CD8-positive, alpha-beta T cell (primary cell): ENCODE measurements at regions of chr21 and their contacts with region 1.

Region 1: GRCh38 chr21:32569261-32570230 is 15.8 kb downstream of the TCP10L start:
- DNase-seq: peak; percentile 67 to 93 (median 84)
- ATAC-seq: peak; percentile 88
- H3K4me3 ChIP-seq: peak overlapping the region; percentile 64 to 78
- H3K4me3 Mint-ChIP-seq: peak overlapping the region; percentile 90
- H3K27ac ChIP-seq: peak overlapping the region; percentile 46 to 63
- H3K27ac Mint-ChIP-seq: peak overlapping the region; percentile 91
- H3K4me1 ChIP-seq: peaks cover 18% of the 10 kb centered on the region
- H3K4me1 Mint-ChIP-seq: peaks cover 25% of the 10 kb centered on the region
- H3K27me3 ChIP-seq: no peaks in the 10 kb centered on the region
- H3K27me3 Mint-ChIP-seq: no peaks in the 10 kb centered on the region
- CTCF ChIP-seq: peak; percentile 97

Region 2: GRCh38 chr21:32278518-32279376 is 290.8 kb before region 1 on chr21 and contains the start of gene MIS18A:
- CTCF ChIA-PET with region 1: no interaction called
- POLR2A ChIA-PET with region 1: interaction called, 4 read pairs
- intact Hi-C with region 1: loop called (anchors 5 to 10 kb)
- DNase-seq: peak; percentile 95 to 99 (median 97)
- ATAC-seq: peak; percentile 95
- H3K4me3 ChIP-seq: peak within 1 kb of the TSS; percentile 67 to 74
- H3K4me3 Mint-ChIP-seq: peak within 1 kb of the TSS; percentile 99
- H3K27ac ChIP-seq: peak within 1 kb of the TSS; percentile 33 to 69
- H3K27ac Mint-ChIP-seq: peak within 1 kb of the TSS; percentile 92
- H3K4me1 ChIP-seq: peaks cover 16% of the 10 kb centered on the region
- H3K4me1 Mint-ChIP-seq: peaks cover 31% of the 10 kb centered on the region
- H3K27me3 ChIP-seq: no peaks in the 10 kb centered on the region
- H3K27me3 Mint-ChIP-seq: no peaks in the 10 kb centered on the region
- CTCF ChIP-seq: no peak
- total RNA-seq, gene MIS18A: 3.7 to 5.1 TPM

Region 3: GRCh38 chr21:32403201-32403777 is 166.3 kb before region 1 on chr21:
- CTCF ChIA-PET with region 1: interaction called, 34 read pairs
- POLR2A ChIA-PET with region 1: interaction called, 6 read pairs
- intact Hi-C with region 1: loop called (anchors 1 to 2 kb)
- DNase-seq: peak; percentile 21 to 80 (median 58)
- ATAC-seq: peak; percentile 81
- H3K4me3 ChIP-seq: no peak overlapping the region
- H3K4me3 Mint-ChIP-seq: no peak overlapping the region
- H3K27ac ChIP-seq: no peak overlapping the region
- H3K27ac Mint-ChIP-seq: no peak overlapping the region
- H3K4me1 ChIP-seq: peaks cover 6% of the 10 kb centered on the region
- H3K4me1 Mint-ChIP-seq: peaks cover 15% of the 10 kb centered on the region
- H3K27me3 ChIP-seq: no peaks in the 10 kb centered on the region
- H3K27me3 Mint-ChIP-seq: peaks cover 4% of the 10 kb centered on the region
- CTCF ChIP-seq: peak; percentile 65

Region 4: DNA sequence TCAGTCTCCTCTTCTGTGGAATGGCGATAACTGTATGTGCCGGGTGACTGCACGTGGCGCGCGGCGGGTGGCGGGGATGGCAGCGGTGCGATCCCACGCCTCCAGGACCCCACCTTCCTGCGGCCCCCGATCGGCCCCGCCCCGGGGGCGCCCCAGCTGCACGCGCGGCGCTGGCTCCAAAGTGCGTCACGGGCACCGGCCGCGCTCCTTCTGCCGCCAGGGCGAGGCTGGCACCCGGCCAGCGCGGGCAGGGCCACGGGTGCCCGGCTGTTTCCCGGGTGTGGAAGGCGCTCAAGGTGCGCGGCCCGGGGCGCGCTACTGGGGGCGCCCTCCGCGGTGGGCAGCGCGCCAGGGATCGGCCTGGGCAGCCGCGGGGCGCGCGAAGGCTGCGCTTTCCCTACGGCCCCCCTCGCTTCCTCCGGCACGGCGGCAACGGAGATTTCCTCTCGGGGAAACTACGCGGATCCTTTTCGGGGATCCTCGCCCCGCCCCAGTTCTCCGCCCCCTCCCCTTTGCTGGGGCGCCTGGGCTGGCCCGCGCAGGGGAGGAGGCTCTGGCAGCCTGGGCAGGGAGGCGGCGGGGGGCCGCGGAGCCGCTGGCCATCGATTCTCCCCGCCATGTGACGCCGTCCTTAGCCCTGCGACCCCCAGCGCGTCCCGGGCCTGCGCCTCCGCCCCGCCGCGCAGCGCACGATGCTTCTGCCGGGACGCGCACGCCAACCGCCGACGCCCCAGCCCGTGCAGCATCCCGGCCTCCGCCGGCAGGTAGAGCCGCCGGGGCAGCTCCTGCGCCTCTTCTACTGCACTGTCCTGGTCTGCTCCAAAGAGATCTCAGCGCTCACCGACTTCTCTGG is 157.2 kb before region 1 on chr21 and contains the start of gene EVA1C:
- CTCF ChIA-PET with region 1: interaction called, 32 read pairs
- POLR2A ChIA-PET with region 1: interaction called, 43 read pairs
- intact Hi-C with region 1: loop called in 1 of 2 experiments (anchors 1 kb)
- DNase-seq: peak; percentile 51 to 90 (median 76)
- ATAC-seq: peak; percentile 71
- H3K4me3 ChIP-seq: peak within 1 kb of the TSS; percentile 63 to 96
- H3K4me3 Mint-ChIP-seq: peak within 1 kb of the TSS; percentile 95
- H3K27ac ChIP-seq: peak within 1 kb of the TSS; percentile 86 to 93
- H3K27ac Mint-ChIP-seq: peak within 1 kb of the TSS; percentile 96
- H3K4me1 ChIP-seq: peaks cover 35% of the 10 kb centered on the region
- H3K4me1 Mint-ChIP-seq: peaks cover 48% of the 10 kb centered on the region
- H3K27me3 ChIP-seq: no peaks in the 10 kb centered on the region
- H3K27me3 Mint-ChIP-seq: no peaks in the 10 kb centered on the region
- CTCF ChIP-seq: peak; percentile 23
- total RNA-seq, gene EVA1C: 6.9 to 10.3 TPM

Region 5: GRCh38 chr21:32494934-32495703 is 74.4 kb before region 1 on chr21:
- CTCF ChIA-PET with region 1: interaction called, 5 read pairs
- POLR2A ChIA-PET with region 1: no interaction called
- intact Hi-C with region 1: loop called in 1 of 2 experiments (anchors 5 kb)
- DNase-seq: no peak
- ATAC-seq: no peak
- H3K4me3 ChIP-seq: no peak overlapping the region
- H3K4me3 Mint-ChIP-seq: no peak overlapping the region
- H3K27ac ChIP-seq: no peak overlapping the region
- H3K27ac Mint-ChIP-seq: no peak overlapping the region
- H3K4me1 ChIP-seq: peaks cover 15% of the 10 kb centered on the region
- H3K4me1 Mint-ChIP-seq: peaks cover 19% of the 10 kb centered on the region
- H3K27me3 ChIP-seq: no peaks in the 10 kb centered on the region
- H3K27me3 Mint-ChIP-seq: no peaks in the 10 kb centered on the region
- CTCF ChIP-seq: no peak

Region 6: GRCh38 chr21:32538147-32538792 is 31.3 kb before region 1 on chr21:
- CTCF ChIA-PET with region 1: interaction called, 7 read pairs
- POLR2A ChIA-PET with region 1: interaction called, 5 read pairs
- intact Hi-C with region 1: loop called (anchors 2 to 5 kb)
- DNase-seq: peak in 8 of 9 experiments; percentile 28 to 77 (median 54)
- ATAC-seq: peak; percentile 93
- H3K4me3 ChIP-seq: no peak overlapping the region
- H3K4me3 Mint-ChIP-seq: peak overlapping the region; percentile 42
- H3K27ac ChIP-seq: peak overlapping the region in 1 of 2 experiments; percentile 49
- H3K27ac Mint-ChIP-seq: peak overlapping the region; percentile 71
- H3K4me1 ChIP-seq: peaks cover 25% of the 10 kb centered on the region
- H3K4me1 Mint-ChIP-seq: peaks cover 27% of the 10 kb centered on the region
- H3K27me3 ChIP-seq: no peaks in the 10 kb centered on the region
- H3K27me3 Mint-ChIP-seq: no peaks in the 10 kb centered on the region
- CTCF ChIP-seq: no peak